GM12878 (cell line): ENCODE measurements at regions of chr16 and their contacts with region 1.

Region 1: GRCh38 chr16:35751191-35751941 is 2292.0 kb downstream of the TP53TG3F start:
- DNase-seq: no peak
- ATAC-seq: no peak
- H3K4me3 ChIP-seq: no peak overlapping the region
- H3K27ac ChIP-seq: no peak overlapping the region
- H3K4me1 ChIP-seq: no peaks in the 10 kb centered on the region
- H3K27me3 ChIP-seq: no peaks in the 10 kb centered on the region
- CTCF ChIP-seq: no peak
- EP300 ChIP-seq: no peak
- POLR2A ChIP-seq: no peak
- RAD21 ChIP-seq: no peak

Region 2: DNA sequence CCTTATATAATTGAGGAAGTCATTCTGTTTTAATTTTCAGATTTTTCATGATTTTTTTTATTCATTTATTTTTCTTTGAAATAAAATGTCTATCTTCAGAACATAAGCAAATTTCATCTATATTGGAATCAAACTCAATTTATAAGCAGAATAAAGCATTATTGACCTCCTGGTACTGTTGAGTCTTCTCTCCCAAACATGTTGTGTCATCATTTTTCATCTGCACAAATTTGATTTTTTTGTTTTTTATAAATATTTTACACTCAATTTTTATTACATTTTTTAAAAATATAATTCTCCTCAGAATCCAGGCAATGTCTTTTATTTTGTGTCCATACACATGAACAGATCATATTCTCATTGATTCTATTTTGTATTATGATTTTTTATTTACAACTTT is 72.0 kb after region 1 on chr16:
- CTCF ChIA-PET with region 1: no interaction called
- POLR2A ChIA-PET with region 1: no interaction called
- RAD21 ChIA-PET with region 1: no interaction called
- SMC1A ChIA-PET with region 1: no interaction called
- in situ Hi-C with region 1: loop called (anchors 10 kb)
- intact Hi-C with region 1: no loop called
- DNase-seq: no peak
- ATAC-seq: no peak
- H3K4me3 ChIP-seq: no peak overlapping the region
- H3K27ac ChIP-seq: no peak overlapping the region
- H3K4me1 ChIP-seq: no peaks in the 10 kb centered on the region
- H3K27me3 ChIP-seq: no peaks in the 10 kb centered on the region
- CTCF ChIP-seq: no peak
- EP300 ChIP-seq: no peak
- POLR2A ChIP-seq: no peak
- RAD21 ChIP-seq: no peak